Prostate gland (tissue), 2 donors: ENCODE measurements at regions of chr22 and their contacts with region 1.

Region 1: DNA sequence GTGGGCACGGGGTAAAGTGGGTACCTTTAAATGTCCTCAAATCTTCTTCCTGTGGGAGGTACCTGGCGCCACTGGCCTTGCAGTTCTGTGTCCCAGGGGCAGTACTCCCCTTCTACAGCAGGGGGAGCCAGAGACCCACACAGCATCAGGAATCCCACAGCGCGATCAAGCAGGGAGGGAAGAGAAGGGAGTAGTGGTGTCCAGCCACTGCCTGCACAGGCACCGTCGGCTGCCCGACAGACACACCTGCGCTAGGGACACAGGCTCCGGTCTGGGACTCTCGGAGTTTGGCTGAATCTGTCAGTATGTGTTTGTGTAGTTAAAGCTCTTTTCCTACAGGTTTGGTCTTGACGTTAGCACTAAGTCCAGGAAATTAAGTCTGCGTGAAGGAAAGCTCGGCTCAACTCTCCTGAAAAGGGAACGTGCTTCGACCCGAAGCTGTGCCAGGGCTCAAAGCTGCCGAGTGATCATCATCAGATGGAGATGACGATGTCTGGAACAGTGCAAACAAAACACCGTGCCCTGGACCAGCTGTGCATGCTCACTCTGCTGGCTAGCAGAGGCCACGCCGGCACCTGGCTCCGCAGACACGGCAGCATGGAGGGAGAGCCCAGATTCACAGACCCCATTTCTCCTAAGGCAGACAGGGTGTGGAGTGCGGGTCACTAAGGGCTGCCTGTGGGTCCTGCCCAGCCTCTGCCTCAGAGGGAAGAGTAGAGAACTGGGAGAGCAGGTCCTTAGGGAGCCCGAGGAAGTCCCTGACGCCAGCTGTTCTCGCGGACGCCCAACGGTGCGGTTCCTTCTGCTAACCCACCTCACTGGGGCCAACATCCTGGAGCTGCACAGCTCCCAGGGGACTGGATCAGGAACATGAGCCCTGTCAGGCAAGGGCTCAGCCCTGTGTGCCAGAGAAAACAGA is 56.0 kb upstream of the BID start:
- DNase-seq: peak; percentile 91
- H3K4me3 ChIP-seq: no peak overlapping the region
- H3K27ac ChIP-seq: peak overlapping the region; percentile 64 to 71
- H3K4me1 ChIP-seq: no peaks in the 10 kb centered on the region
- H3K27me3 ChIP-seq: no peaks in the 10 kb centered on the region
- CTCF ChIP-seq: peak; percentile 97 to 100 (median 98)
- POLR2A ChIP-seq: no peak

Region 2: GRCh38 chr22:17891481-17892167 is 61.3 kb after region 1 on chr22:
- intact Hi-C with region 1: loop called (anchors 1 kb)
- DNase-seq: peak; percentile 70
- H3K4me3 ChIP-seq: no peak overlapping the region
- H3K27ac ChIP-seq: peak overlapping the region; percentile 70 to 80
- H3K4me1 ChIP-seq: peaks cover under 1% of the 10 kb centered on the region
- H3K27me3 ChIP-seq: no peaks in the 10 kb centered on the region
- CTCF ChIP-seq: peak in 3 of 4 experiments; percentile 25 to 48 (median 47)
- POLR2A ChIP-seq: no peak

Region 3: DNA sequence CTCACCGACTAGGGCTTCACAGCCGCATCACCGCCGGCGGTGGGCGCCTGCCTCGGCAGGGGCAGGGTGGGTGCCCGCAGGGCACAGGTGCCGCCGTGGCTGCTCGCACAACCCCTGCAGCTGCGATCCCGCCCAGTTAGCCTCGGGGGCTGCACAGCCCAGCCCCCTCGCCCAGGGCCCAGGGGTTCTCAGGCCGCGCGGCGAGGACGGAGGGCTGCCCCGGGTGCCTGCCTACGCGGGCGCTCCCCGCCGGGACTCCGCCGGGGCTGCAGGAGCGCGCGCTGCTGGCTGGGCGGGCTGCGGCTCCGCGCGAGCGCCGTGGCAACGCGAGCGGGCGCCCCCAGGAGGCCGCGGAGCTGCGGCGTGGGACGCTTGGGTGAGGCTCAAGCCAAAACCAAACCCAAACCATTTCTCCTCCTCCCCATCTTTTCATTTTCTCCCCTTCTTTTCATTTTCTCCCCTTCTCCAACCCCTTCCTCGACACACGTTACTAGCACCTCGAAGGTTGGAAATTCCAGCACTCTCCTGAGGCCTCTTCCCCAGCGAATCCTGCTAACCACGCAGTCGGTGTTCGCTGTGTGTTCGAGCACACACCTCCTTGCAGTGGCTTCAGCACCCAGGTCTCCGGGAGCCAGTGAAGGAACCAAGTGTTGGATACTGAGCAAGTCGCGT is 194.1 kb after region 1 on chr22 and contains the start of gene MICAL3:
- intact Hi-C with region 1: loop called (anchors 2 kb)
- DNase-seq: peak; percentile 57
- H3K4me3 ChIP-seq: peak within 1 kb of the TSS; percentile 55 to 58
- H3K27ac ChIP-seq: peak within 1 kb of the TSS; percentile 76 to 88
- H3K4me1 ChIP-seq: no peaks in the 10 kb centered on the region
- H3K27me3 ChIP-seq: no peaks in the 10 kb centered on the region
- CTCF ChIP-seq: peak in 3 of 4 experiments; percentile 31 to 68 (median 66)
- POLR2A ChIP-seq: no peak
- total RNA-seq, gene MICAL3: 58.6 to 78.7 TPM

Region 4: GRCh38 chr22:18077639-18078328 is 247.5 kb after region 1 on chr22 and contains the start of gene PEX26:
- intact Hi-C with region 1: loop called (anchors 1 kb)
- DNase-seq: peak; percentile 96
- H3K4me3 ChIP-seq: peak within 1 kb of the TSS; percentile 88 to 89
- H3K27ac ChIP-seq: peak within 1 kb of the TSS; percentile 71 to 82
- H3K4me1 ChIP-seq: peaks cover 19% of the 10 kb centered on the region
- H3K27me3 ChIP-seq: no peaks in the 10 kb centered on the region
- CTCF ChIP-seq: no peak
- POLR2A ChIP-seq: peak; percentile 54
- total RNA-seq, gene PEX26: 34.7 to 38.2 TPM